ENCODE measurements at regions of chr11 and their contacts with region 1.

Region 1: DNA sequence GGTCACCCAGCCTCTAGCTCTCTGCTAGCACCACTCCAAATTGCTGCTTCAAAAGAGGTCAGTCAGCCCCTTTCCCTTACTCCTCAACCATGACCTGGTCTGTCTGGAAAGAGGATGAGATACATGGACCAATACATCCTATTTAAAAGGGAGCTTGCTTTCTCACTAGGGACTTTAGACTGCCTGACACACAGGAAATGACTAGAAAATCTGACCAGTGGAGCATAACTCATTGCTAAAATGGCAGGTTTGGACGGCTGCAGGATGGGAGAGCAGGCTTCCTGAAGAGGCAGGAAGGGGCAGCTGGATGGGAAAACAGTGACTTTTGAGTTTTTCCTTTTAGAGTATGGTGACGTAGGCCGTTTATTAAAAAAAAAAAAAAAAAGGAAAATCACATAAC is 25.3 kb downstream of the STIM1 start:
- DNase-seq: no peak
- ATAC-seq: peak; percentile 80
- H3K4me3 Mint-ChIP-seq: peak overlapping the region; percentile 60
- H3K27ac Mint-ChIP-seq: peak overlapping the region; percentile 87
- H3K4me1 Mint-ChIP-seq: peaks cover 85% of the 10 kb centered on the region
- H3K27me3 Mint-ChIP-seq: no peaks in the 10 kb centered on the region
- CTCF ChIP-seq: no peak

Region 2: DNA sequence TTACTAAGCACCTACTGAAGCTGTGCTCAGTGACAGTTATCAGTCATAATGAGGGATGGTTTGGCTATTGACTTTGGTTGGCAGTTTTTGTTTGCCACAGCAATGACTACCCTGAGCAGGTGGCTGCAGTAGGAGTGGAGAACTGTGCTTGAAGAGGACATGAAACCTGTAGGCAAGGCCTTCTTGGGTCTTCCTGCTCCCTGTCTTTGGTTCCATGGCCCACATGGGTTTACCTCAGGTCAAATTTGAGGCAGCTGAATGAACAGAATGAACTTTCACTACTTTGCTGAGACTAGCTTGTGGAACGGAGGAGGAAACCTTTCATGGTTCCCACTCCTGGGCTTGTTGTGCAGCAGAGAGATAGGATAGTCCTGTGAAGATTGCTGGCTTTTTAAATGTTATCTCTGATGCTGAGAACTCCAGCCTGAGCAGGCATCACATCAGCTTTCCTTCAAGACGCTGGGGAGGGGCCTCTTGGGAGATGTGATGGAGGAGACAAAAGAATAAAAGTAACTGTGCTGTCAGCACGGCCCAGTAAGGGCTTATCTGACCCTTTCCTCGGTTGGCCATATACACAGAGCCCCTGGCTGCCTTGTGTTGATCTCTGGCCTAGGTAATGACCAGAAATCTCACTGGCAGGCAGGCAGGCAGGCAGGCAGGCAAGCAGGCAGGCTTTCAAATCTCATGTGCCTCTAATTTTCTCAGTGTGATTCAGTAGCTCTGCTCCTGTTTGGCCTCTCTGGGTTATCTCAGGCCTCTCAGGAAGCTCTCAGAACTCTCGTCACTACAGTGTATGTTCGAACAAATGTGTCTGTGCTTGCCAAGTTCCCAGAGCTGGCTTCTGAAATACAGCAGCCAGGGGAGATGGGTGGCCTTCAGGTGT is 13.3 kb before region 1 on chr11:
- CTCF ChIA-PET with region 1: interaction called, 4 read pairs
- POLR2A ChIA-PET with region 1: interaction called, 10 read pairs
- intact Hi-C with region 1: loop called (anchors 1 kb)
- DNase-seq: no peak
- ATAC-seq: peak; percentile 49
- H3K4me3 Mint-ChIP-seq: peak overlapping the region; percentile 12
- H3K27ac Mint-ChIP-seq: peak overlapping the region; percentile 69
- H3K4me1 Mint-ChIP-seq: peaks cover 87% of the 10 kb centered on the region
- H3K27me3 Mint-ChIP-seq: no peaks in the 10 kb centered on the region
- CTCF ChIP-seq: no peak

Region 3: GRCh38 chr11:4006946-4007680 is 126.4 kb after region 1 on chr11:
- CTCF ChIA-PET with region 1: no interaction called
- POLR2A ChIA-PET with region 1: no interaction called
- intact Hi-C with region 1: no loop called
- DNase-seq: no peak
- ATAC-seq: no peak
- H3K4me3 Mint-ChIP-seq: no peak overlapping the region
- H3K27ac Mint-ChIP-seq: peak overlapping the region; percentile 42
- H3K4me1 Mint-ChIP-seq: peaks cover 10% of the 10 kb centered on the region
- H3K27me3 Mint-ChIP-seq: no peaks in the 10 kb centered on the region
- CTCF ChIP-seq: no peak

Region 4: GRCh38 chr11:4393209-4393857 is 512.6 kb after region 1 on chr11 and contains the start of gene TRIM21:
- CTCF ChIA-PET with region 1: no interaction called
- POLR2A ChIA-PET with region 1: no interaction called
- intact Hi-C with region 1: no loop called
- DNase-seq: peak; percentile 74
- ATAC-seq: peak; percentile 99
- H3K4me3 Mint-ChIP-seq: peak within 1 kb of the TSS; percentile 95
- H3K27ac Mint-ChIP-seq: peak within 1 kb of the TSS; percentile 90
- H3K4me1 Mint-ChIP-seq: peaks cover 32% of the 10 kb centered on the region
- H3K27me3 Mint-ChIP-seq: peaks cover 8% of the 10 kb centered on the region
- CTCF ChIP-seq: no peak
- total RNA-seq, gene TRIM21: 27.7 and 30.8 TPM in 2 replicates

Measured in activated B cell treated with CpG ODN at 0.5 μM for 24 hours (primary cell).